PC-9 (cell line): ENCODE measurements at regions of chr15 and their contacts with region 1.

Region 1: GRCh38 chr15:47366884-47367283 is 350.4 kb upstream of the SEMA6D start:
- DNase-seq: no peak
- H3K4me3 ChIP-seq: no peak overlapping the region
- H3K27ac ChIP-seq: no peak overlapping the region
- H3K4me1 ChIP-seq: no peaks in the 10 kb centered on the region
- H3K27me3 ChIP-seq: no peaks in the 10 kb centered on the region
- CTCF ChIP-seq: no peak

Region 2: GRCh38 chr15:47384341-47384740 is 17.5 kb after region 1 on chr15:
- CTCF ChIA-PET with region 1: interaction called, 10 read pairs
- POLR2A ChIA-PET with region 1: no interaction called
- intact Hi-C with region 1: no loop called
- DNase-seq: no peak
- H3K4me3 ChIP-seq: no peak overlapping the region
- H3K27ac ChIP-seq: no peak overlapping the region
- H3K4me1 ChIP-seq: no peaks in the 10 kb centered on the region
- H3K27me3 ChIP-seq: no peaks in the 10 kb centered on the region
- CTCF ChIP-seq: no peak